Left ventricle myocardium superior (tissue), 1 donor: ENCODE measurements at regions of chr17 and their contacts with region 1.

Region 1: DNA sequence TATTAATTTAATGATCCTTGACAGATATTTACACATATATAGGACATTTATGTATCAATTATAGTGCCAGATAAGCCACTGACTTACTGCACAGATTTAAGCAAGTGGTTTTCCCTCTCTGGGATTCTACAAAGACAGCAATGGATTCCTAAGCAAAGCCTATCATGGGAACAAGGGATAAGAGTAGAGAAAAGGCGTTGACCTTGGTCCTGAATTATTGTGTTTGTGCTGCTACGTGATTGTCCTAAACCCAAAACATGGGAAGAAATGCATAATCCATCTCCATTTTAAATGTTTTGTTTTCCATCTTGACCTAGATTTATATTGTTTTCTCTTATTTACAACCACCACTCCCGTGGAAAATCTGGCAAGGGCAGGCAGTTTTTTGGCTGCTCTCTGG is 14.0 kb downstream of the SLFN11 start:
- DNase-seq: no peak
- ATAC-seq: no peak

Region 2: DNA sequence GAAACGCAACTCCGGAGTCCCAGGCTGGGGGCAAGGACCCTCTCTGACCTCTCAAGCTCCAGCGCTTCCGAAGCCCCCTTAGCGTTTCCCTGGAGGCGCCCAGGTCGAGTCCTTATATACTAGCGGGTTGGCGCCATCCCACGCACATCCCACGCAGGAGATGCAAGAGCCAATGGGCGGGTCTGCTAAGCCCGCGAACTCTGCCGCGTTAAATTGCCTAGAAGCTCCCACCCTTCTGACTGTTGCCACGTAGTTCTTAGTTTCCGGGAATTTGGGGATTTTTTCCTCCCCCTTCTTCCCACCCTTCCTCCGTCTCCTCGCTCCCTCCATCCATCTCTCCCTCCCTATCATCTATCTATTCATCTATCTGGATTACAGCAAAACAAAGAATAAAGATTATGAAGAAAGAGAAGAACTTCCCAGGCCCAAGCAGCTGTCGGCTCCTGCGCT is 14.2 kb after region 1 on chr17 and contains the start of gene SLFN11:
- intact Hi-C with region 1: loop called (anchors 2 kb)
- DNase-seq: peak; percentile 89
- ATAC-seq: peak; percentile 97
- total RNA-seq, gene SLFN11: 18.2 TPM

Region 3: DNA sequence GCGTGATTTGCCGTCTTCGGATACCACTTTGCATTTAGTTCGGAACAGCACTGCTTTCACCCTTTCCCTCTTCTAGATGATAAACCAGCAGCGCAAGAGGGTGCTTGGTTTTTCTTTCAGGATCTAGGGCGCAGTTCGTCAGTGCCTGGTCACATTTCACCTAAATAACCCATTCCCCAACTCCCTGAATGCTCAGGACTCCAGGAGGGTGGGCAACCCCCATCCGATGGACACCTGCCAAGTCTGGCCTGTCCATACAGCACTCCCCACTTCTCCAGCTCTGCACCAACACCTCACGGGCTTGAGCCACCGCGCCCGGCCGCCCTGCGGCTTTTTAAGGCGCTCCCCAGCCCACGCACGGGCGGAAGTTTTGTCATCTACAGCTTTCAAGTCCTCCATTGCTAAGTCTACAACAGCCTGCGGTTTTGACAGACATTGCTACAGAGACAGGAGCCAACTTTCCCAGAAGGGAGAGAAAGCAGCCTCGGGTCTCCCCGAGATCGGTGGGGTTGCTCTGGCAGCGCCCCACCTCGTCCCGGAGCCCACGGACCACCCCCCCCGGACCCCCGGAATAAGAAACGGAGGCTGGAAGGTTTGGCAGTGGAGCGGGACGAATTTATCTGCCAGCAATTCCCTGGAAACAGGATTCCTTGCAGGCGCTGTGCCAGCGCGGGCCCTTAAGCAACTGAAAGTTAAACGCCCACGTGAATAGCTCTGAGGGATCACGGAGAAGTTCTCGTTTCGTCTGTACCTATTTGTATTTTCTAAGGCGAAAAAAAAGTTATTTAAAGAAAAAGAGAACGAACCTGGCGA is 127.7 kb after region 1 on chr17:
- intact Hi-C with region 1: no loop called
- DNase-seq: peak; percentile 67
- ATAC-seq: peak; percentile 81